WTC11 (cell line): ENCODE measurements at regions of chr7 and their contacts with region 1.

Region 1: GRCh38 chr7:42593860-42594259 is 318.0 kb downstream of the C7orf25 start:
- DNase-seq: no peak
- ATAC-seq: peak; percentile 71
- H3K4me3 Mint-ChIP-seq: no peak overlapping the region
- H3K27ac Mint-ChIP-seq: peak overlapping the region; percentile 21; the same call in 1 of the 2 replicates
- H3K4me1 Mint-ChIP-seq: peaks cover 9% of the 10 kb centered on the region
- H3K27me3 Mint-ChIP-seq: no peaks in the 10 kb centered on the region
- CTCF ChIP-seq: no peak

Region 2: GRCh38 chr7:42283553-42283952 is 310.3 kb before region 1 on chr7:
- CTCF ChIA-PET with region 1: no interaction called
- POLR2A ChIA-PET with region 1: interaction called, 17 read pairs
- DNase-seq: no peak
- ATAC-seq: no peak
- H3K4me3 Mint-ChIP-seq: no peak overlapping the region
- H3K27ac Mint-ChIP-seq: no peak overlapping the region
- H3K4me1 Mint-ChIP-seq: no peaks in the 10 kb centered on the region
- H3K27me3 Mint-ChIP-seq: no peaks in the 10 kb centered on the region
- CTCF ChIP-seq: no peak

Region 3: DNA sequence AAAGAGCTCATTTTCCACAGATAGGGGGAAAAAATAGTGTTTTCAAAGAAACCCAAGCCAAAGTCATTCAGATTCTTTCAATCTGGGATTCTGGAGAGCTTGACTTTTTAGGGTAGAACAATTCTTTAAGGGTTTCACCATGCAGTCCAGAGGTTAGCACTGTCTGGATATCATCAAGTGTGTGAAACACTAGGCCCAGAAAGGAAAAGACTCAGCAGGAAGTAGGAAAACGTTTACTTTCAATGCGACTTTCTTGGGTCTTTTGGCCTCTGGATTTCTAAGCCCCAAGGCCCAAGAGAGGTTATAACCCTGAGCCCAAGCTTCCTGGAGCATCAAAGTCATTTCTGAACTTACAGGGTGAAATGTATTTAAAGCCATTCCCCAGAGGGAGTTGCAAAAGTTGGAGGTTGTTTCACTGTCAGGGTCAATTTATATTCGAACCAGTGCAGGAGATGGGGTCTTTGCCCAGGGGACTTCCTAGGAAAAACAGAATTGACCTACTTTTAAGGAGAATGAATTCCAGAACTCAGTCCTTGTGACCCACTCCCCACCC is 160.0 kb after region 1 on chr7:
- CTCF ChIA-PET with region 1: no interaction called
- POLR2A ChIA-PET with region 1: no interaction called
- DNase-seq: no peak
- ATAC-seq: no peak; the same call in 1 of the 2 replicates
- H3K4me3 Mint-ChIP-seq: no peak overlapping the region
- H3K27ac Mint-ChIP-seq: no peak overlapping the region
- H3K4me1 Mint-ChIP-seq: peaks cover 16% of the 10 kb centered on the region
- H3K27me3 Mint-ChIP-seq: peaks cover 18% of the 10 kb centered on the region
- CTCF ChIP-seq: no peak

Region 4: DNA sequence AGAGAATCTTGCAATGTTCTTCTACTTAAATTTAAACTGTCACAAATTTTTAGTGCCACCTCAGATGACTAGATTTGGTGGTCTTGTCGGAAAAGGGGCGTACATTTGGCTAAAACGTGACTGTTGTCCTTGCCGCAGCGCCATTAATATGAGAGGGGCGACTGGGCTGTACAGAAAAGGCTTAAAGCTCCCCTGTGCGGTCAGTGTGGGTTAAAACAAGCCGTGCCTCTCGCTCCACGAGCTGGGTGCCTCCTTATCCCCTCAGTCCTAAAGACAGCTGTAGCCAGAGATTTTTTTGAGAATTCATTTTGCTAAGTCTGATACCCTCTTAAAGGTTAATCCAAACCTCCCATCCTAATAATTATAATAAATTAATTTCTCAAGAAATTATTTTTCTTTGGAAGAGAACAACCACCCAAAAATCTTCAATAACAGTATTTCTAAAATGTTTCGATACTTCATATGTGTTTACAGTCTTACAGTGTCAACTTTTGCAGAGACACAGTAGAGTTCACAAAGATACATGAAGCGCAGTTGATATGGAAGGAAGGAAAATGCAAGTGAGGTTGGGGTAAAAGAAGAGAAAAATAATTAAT is 249.4 kb after region 1 on chr7:
- CTCF ChIA-PET with region 1: no interaction called
- POLR2A ChIA-PET with region 1: no interaction called
- DNase-seq: peak; percentile 68
- ATAC-seq: peak; percentile 99
- H3K4me3 Mint-ChIP-seq: no peak overlapping the region
- H3K27ac Mint-ChIP-seq: no peak overlapping the region
- H3K4me1 Mint-ChIP-seq: peaks cover 23% of the 10 kb centered on the region
- H3K27me3 Mint-ChIP-seq: no peaks in the 10 kb centered on the region
- CTCF ChIP-seq: 0 out of 2 replicates have a peak, but pooled peaks have one; percentile 17